ENCODE measurements at regions of chr6 and their contacts with region 1.

Region 1: GRCh38 chr6:13873285-13874190 is 51.2 kb upstream of the RNF182 start:
- DNase-seq: peak; percentile 69
- ATAC-seq: peak; percentile 96
- H3K4me3 ChIP-seq: peak overlapping the region; percentile 23 to 64 (median 39); a peak in 5 of 6 replicates
- H3K27ac ChIP-seq: no peak overlapping the region
- H3K4me1 ChIP-seq: peaks cover 13% of the 10 kb centered on the region
- H3K27me3 ChIP-seq: peaks cover 0 to 17% of the 10 kb centered on the region in 2 experiments; a peak in 4 of 5 replicates
- CTCF ChIP-seq: peak; percentile 99
- EP300 ChIP-seq: no peak
- POLR2A ChIP-seq: no peak
- RAD21 ChIP-seq: peak; percentile 73

Region 2: DNA sequence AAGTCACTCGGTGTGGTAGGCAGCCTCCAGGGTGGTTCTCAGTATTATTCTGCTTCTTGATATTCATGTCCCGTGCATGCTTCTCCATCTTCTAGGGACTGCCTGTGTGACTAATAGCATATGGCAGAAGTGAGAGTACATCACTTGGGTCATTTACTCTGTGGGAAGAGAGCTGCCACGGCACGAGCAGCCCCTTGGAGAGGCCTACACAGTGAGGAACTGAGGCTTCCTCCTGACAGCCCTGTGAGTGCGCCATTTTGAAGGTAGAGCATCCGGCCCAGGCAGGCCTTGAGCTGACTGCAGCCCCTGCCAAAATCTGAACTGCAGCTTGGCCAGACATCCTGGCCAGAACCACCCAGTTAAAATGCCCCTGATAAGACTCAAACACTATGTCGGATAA is 41.9 kb before region 1 on chr6:
- CTCF ChIA-PET with region 1: no interaction called
- POLR2A ChIA-PET with region 1: no interaction called
- in situ Hi-C with region 1: no loop called
- intact Hi-C with region 1: no loop called
- DNase-seq: no peak
- ATAC-seq: no peak
- H3K4me3 ChIP-seq: no peak overlapping the region
- H3K27ac ChIP-seq: no peak overlapping the region
- H3K4me1 ChIP-seq: peaks cover 24% of the 10 kb centered on the region
- H3K27me3 ChIP-seq: no peaks in the 10 kb centered on the region
- CTCF ChIP-seq: no peak
- EP300 ChIP-seq: no peak
- POLR2A ChIP-seq: no peak
- RAD21 ChIP-seq: no peak

Region 3: DNA sequence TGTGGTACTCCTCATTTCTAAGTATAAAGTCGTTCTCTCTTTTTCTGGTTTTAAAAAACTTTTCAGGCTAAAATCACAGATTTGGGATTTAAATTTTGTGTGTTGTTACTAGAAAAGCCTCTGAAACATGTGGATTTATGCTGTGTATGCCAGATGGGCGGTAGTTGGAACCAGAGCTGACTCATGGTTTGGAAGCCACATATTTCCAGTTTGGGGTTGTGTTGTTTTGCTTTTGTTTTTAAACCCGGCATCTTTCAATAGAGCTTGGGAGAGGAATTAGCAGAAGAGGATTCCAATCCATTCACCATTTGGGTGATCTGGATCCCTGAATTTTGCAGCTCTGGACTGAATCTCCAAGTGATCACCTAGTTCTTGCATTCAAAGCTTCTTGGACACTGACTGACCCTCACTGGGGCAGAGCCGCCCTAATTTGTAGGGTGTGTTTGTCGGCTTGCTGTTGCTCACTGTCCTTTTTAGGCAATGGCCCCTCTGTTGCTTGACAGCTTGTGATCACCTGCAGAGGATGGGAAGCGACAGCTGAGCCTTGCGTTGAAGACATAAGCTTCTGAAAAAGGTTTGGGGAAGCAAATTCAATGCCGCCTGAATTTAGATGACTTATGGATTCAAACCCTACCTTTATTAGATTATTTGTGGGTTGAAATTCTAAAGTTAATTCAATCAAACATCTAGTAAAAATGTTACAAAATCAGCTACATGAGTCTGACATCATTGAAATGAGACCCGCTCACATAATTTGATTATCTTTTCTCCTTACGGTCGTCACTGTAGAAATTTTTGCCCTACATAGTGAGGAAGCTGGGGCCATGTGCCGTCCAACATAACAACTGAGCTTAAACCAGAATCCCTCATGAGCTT is 164.1 kb after region 1 on chr6:
- CTCF ChIA-PET with region 1: no interaction called
- POLR2A ChIA-PET with region 1: no interaction called
- in situ Hi-C with region 1: no loop called
- intact Hi-C with region 1: no loop called
- DNase-seq: no peak
- ATAC-seq: no peak
- H3K4me3 ChIP-seq: no peak overlapping the region
- H3K27ac ChIP-seq: no peak overlapping the region
- H3K4me1 ChIP-seq: no peaks in the 10 kb centered on the region
- H3K27me3 ChIP-seq: peaks cover 0 to 40% of the 10 kb centered on the region in 2 experiments; a peak in 3 of 5 replicates
- CTCF ChIP-seq: no peak
- EP300 ChIP-seq: no peak
- POLR2A ChIP-seq: no peak
- RAD21 ChIP-seq: no peak

Region 4: DNA sequence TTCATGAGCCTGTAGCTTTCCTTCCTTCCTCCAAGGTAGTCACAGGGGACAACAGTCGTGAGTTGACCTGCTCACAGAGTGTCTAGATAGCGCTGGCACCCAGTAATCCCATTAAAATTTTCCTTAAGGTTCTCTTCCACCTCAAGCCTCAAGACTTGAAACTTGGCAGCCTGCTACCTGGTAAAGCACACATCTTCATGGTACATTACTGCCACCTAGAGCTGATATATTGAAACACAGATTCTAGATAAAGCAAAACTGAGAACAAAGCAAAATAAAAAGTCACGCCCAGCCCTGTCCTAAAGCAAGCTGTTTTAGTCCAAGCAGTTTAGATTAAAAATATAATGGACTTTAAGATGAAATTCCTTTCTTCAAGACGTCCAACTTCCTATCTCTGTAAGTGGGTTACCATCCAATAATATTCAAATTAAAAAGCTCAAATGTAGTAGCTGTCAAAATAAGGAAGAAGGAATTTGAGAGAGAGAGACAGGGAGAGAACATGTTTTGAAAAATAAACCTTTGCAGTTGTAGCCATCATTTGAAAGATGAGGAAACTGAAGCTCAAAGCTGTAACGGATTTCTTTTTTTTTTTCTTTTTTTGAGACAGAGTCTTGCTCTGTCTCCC is 193.4 kb after region 1 on chr6:
- CTCF ChIA-PET with region 1: interaction called, 10 read pairs
- POLR2A ChIA-PET with region 1: no interaction called
- in situ Hi-C with region 1: no loop called
- intact Hi-C with region 1: no loop called
- DNase-seq: peak; percentile 55
- ATAC-seq: peak; percentile 79
- H3K4me3 ChIP-seq: no peak overlapping the region
- H3K27ac ChIP-seq: no peak overlapping the region
- H3K4me1 ChIP-seq: no peaks in the 10 kb centered on the region
- H3K27me3 ChIP-seq: peaks cover 1 to 3% of the 10 kb centered on the region in 2 experiments; a peak in 1 of 5 replicates
- CTCF ChIP-seq: peak; percentile 76
- EP300 ChIP-seq: no peak
- POLR2A ChIP-seq: no peak
- RAD21 ChIP-seq: peak; percentile 49; the same call in 1 of the 2 replicates

Measured in HepG2 (cell line).